GM10248 (cell line): ENCODE measurements at regions of chr4 and their contacts with region 1.

Region 1: DNA sequence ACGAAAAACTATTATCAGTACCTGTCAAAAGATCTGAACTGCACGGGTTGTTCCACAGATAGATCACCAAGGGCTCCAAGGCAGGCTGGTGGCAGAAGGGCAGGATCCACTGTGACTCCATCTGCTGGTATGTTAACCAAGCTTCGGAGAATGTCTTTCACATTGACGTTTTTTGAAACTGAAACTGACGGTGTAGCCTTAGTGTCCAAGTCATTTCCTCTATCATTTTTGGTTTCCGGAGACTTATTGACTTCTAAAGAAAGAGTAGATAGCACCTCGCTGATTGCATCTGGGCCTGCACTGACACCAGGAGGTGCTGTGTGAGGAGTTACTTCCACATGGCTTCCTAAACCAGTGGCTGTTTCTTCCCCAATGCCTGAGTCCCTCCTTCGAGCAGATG is 186.9 kb downstream of the LRBA start:
- DNase-seq: peak; percentile 64
- CTCF ChIP-seq: no peak

Region 2: DNA sequence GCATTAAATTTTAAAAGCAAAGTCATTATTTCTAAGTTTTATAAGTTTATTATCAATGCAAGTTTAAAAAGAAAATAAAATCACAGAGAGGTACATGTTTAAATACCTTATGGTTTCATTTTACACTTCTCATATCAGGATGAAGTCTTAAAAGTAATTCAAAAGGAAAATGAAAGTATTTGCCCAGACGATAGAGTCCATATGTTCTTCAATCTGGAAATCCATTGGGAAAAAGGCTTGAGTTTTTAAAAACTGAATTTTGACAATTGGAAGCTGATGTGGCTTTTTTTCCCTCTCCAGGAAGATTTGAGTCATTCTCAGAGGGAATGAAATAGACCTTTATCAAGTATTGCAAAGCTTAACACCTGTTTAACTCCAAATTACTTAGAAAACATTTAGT is 209.1 kb before region 1 on chr4:
- CTCF ChIA-PET with region 1: no interaction called
- POLR2A ChIA-PET with region 1: no interaction called
- DNase-seq: peak; percentile 8
- CTCF ChIP-seq: no peak

Region 3: DNA sequence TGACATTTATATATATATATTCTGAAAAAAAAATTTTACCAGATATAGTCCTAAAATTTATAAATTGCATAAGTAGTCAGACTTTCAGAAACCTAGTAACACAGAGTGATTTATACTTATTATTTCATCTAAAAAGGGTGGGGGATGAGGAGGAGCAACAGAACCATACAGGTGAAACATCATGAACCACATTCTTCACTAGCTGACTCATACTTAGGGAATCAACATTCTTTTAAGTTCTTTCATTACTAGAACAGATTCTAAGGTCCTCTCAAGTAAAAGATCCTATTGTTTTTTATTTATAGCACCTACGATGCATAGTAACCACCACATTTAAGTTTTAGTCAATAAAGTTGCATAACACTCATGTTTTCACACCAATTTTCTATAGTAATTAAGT is 20.9 kb after region 1 on chr4:
- CTCF ChIA-PET with region 1: interaction called, 10 read pairs
- POLR2A ChIA-PET with region 1: no interaction called
- DNase-seq: no peak
- CTCF ChIP-seq: no peak

Region 4: GRCh38 chr4:151004222-151004621 is 176.1 kb after region 1 on chr4:
- CTCF ChIA-PET with region 1: no interaction called
- POLR2A ChIA-PET with region 1: no interaction called
- DNase-seq: no peak
- CTCF ChIP-seq: no peak